OCI-LY7 (cell line): ENCODE measurements at regions of chr19 and their contacts with region 1.

Region 1: GRCh38 chr19:37466798-37467607 is at the start of gene ZNF569:
- DNase-seq: peak; percentile 94
- H3K4me3 ChIP-seq: peak within 1 kb of the TSS; percentile 78
- H3K27ac ChIP-seq: peak within 1 kb of the TSS; percentile 81
- H3K4me1 ChIP-seq: peaks cover 16% of the 10 kb centered on the region
- CTCF ChIP-seq: no peak
- total RNA-seq, gene ZNF569: 10.5 and 11.8 TPM in 2 replicates

Region 2: GRCh38 chr19:36573020-36573885 is 893.8 kb before region 1 on chr19 and contains the start of gene ZNF529:
- CTCF ChIA-PET with region 1: no interaction called
- POLR2A ChIA-PET with region 1: interaction called, 6 read pairs
- intact Hi-C with region 1: loop called (anchors 5 kb)
- DNase-seq: peak; percentile 94
- H3K4me3 ChIP-seq: peak within 1 kb of the TSS; percentile 91
- H3K27ac ChIP-seq: peak within 1 kb of the TSS; percentile 35
- H3K4me1 ChIP-seq: peaks cover 19% of the 10 kb centered on the region
- CTCF ChIP-seq: 0 out of 2 replicates have a peak, but pooled peaks have one; percentile 14
- total RNA-seq, gene ZNF529: 9.0 and 11.6 TPM in 2 replicates

Region 3: DNA sequence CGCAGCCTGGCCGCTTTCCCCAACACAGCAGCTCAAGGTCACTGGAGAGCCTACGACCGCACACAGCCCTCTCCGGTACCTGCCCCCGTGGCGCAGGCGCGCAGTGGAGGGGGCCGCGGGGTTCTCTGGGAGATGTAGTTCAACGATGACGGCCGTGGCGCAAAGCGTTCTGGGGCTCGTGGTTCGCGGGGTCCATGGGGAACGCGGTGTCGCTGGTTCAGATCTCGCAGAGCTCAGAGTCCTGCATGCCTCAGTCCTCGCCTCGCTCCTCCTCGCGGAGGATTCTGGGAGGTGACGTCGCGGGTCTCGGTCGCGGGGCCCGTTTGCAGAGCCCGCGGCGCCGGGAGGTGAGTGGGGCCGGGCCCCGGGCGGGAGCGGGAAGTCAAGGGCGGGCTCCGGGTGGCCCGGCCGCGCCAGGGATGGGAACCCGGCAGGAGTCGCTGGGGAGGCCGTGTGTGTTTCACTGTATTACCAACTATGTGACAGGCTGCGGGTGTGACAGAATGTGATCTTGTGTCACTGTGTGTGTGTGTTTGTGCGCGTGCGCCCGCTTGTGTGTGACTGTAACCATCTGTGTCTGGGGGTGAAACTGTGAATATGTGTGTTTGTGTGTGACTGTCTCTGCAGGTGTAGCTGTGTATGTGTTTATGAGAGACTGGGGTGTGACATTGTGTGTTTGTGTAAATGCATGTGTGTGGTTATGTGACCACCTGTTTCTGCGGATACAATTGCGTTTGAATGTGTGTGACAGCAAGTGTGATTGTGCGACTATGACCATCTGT is 95.9 kb before region 1 on chr19 and contains the start of gene ZNF527:
- CTCF ChIA-PET with region 1: no interaction called
- POLR2A ChIA-PET with region 1: interaction called, 3 read pairs
- intact Hi-C with region 1: loop called (anchors 1 kb)
- DNase-seq: peak; percentile 98
- H3K4me3 ChIP-seq: peak within 1 kb of the TSS; percentile 71
- H3K27ac ChIP-seq: peak within 1 kb of the TSS; percentile 46
- H3K4me1 ChIP-seq: peaks cover 4% of the 10 kb centered on the region
- CTCF ChIP-seq: no peak; the same call in 1 of the 2 replicates
- total RNA-seq, gene ZNF527: 7.9 and 9.2 TPM in 2 replicates

Region 4: GRCh38 chr19:37389234-37389633 is 77.8 kb before region 1 on chr19:
- CTCF ChIA-PET with region 1: no interaction called
- POLR2A ChIA-PET with region 1: no interaction called
- intact Hi-C with region 1: no loop called
- DNase-seq: no peak
- H3K4me3 ChIP-seq: no peak overlapping the region
- H3K27ac ChIP-seq: no peak overlapping the region
- H3K4me1 ChIP-seq: no peaks in the 10 kb centered on the region
- CTCF ChIP-seq: no peak

Region 5: DNA sequence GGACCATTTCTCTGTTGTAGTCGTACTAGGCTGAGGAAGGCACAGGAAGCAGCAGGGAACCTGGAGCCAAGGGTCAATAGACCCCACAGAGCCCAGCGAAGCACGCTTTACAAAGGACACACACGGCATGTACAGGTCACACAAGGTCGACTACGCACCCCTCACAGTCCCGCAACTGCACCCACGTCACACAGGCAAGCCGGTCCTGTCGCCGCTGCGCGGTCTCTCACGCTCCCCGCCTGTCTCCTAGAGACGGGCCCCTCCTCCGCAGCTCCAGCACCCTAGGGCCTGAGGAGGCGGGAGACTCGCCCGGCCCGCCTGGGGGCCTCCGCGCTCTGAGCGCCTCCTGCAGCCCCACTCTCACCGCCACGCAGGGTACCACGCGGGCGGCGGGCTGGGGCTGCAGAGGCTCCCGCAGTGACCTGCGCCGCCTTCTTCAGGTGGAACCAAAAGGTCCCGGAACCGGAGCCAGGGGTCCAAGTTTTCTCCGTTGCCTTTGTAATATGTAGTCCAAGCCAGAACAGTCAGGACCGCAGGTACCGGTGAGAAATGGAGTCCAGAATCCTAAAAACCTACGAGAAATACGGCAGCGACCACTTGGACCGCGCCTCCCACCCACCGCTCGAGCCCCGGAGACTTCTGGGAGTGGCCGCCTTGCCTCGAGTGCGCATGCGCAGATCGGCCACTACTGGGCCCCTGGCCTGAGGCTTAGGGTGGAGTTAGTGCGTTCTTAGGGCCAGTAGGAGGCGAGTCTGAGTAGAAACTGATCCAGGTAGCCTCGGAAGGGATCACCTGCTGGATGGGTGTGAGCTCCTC is 252.3 kb after region 1 on chr19 and contains the start of gene ZNF607:
- CTCF ChIA-PET with region 1: no interaction called
- POLR2A ChIA-PET with region 1: no interaction called
- intact Hi-C with region 1: loop called (anchors 10 kb)
- DNase-seq: peak; percentile 96
- H3K4me3 ChIP-seq: peak within 1 kb of the TSS; percentile 80
- H3K27ac ChIP-seq: peak within 1 kb of the TSS; percentile 9
- H3K4me1 ChIP-seq: peaks cover 9% of the 10 kb centered on the region
- CTCF ChIP-seq: peak; percentile 78
- total RNA-seq, gene ZNF607: 5.5 and 6.3 TPM in 2 replicates